Right cardiac atrium (tissue), 5 donors: ENCODE measurements at regions of chr6 and their contacts with region 1.

Region 1: DNA sequence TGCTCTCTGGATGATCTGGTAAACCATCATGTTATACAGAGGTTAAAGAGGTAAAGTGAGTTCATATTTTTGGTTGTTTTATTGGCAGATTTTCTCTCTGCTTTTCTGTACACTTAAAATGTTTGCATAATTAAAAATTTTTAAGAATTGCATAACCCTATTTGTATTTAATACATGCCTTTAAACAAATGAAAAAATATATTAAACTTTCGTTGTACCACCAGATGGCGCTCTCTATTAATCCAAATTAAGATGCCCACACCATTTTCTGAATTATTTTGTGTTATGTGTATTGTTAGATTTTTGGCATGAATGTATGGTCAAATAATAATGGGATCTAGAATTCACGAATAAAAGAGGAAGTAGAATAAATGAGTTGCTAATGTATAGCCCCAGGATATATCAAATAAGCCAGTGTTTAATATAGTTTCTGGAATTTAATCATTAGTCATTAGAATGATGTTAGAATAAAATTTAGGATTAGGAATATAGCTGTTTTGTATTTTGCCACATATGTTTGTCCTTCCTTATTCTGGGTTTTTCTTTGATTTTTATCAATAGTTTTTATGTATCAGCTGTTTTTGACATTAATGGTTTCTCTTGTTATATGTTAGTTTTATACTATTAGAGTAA is 38.9 kb downstream of the SMAP1 start:
- DNase-seq: no peak
- ATAC-seq: no peak
- H3K4me3 ChIP-seq: no peak overlapping the region
- H3K27ac ChIP-seq: no peak overlapping the region
- H3K4me1 ChIP-seq: peaks cover 1% of the 10 kb centered on the region
- H3K27me3 ChIP-seq: no peaks in the 10 kb centered on the region

Region 2: DNA sequence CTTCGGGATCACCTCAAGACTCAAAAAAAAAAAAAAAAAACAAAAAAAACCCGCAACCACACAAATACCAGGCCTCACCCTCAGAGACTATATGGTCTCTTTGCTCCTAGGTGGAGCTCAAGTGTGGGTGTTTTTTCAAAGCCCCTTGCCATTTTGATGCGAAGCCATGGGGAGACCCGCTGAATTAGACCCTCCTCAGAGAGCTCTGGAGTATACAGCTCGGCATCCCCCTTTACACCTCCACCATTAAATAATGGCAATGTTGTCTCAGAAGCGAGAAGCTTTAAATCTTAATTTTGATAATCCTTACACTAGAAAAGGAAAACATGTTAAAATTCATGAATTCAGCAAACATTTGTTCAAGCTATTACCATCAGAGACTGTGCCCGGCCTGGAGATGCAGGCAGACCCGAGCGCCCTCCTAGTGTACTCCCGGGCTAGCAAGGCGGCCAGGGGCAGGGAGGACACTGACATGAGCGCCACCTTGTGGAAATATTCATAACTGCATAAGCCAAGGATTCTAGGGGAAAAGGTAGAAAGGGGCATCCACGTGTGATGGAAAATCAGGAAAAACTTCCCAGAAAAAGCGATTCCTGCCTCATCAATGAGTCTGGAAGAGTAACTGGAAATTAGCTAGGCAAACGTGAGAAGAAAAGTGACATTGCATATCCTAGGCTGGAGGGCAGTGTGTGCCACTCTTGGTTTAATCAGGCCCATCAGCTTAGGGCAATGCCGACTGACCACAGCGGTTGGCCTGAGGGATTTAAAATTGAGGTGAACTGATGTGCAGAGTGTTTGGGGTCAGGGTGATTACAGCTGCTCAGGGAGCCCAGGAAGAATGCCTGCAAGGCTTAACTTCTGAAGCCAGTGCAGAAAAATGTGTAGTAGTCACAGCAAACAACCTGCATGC is 177.7 kb after region 1 on chr6:
- intact Hi-C with region 1: loop called in 3 of 4 experiments (anchors 2 to 5 kb)
- DNase-seq: peak; percentile 47 to 81 (median 64)
- ATAC-seq: peak; percentile 83 to 87
- H3K4me3 ChIP-seq: no peak overlapping the region
- H3K27ac ChIP-seq: no peak overlapping the region
- H3K4me1 ChIP-seq: no peaks in the 10 kb centered on the region
- H3K27me3 ChIP-seq: no peaks in the 10 kb centered on the region

Region 3: DNA sequence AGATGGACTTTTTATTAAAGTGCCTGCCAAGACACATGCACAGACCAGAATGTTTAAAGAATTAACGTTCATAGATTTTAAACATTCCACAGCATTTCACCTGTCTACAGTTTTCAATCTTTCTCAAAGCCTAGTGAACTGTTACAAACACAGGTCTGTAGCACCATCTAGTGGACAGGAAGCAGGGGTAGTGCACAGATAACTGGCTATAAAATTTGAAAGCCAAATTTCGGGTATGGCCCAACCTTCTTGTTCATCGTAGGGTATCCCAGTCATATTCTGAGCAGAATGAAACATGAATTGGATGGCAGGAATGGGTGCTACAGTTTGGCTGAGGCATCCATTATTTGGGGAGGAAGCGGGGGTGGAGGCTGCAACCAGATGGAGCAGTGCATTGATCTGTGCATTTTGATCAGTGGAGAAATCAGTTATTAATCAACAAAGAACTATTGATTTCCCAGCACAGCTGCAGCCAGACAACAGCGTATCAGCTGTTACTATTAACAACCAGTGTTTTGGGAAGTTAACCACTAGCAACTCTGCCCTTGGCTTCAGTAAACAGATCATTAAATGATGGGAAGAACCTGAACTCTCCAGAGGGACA is 306.4 kb after region 1 on chr6:
- intact Hi-C with region 1: loop called in 1 of 4 experiments (anchors 10 kb)
- DNase-seq: no peak
- ATAC-seq: peak; percentile 56 to 73
- H3K4me3 ChIP-seq: no peak overlapping the region
- H3K27ac ChIP-seq: no peak overlapping the region
- H3K4me1 ChIP-seq: no peaks in the 10 kb centered on the region
- H3K27me3 ChIP-seq: no peaks in the 10 kb centered on the region